Common myeloid progenitor, CD34-positive (primary cell): ENCODE measurements at regions of chr7 and their contacts with region 1.

Region 1: GRCh38 chr7:142469696-142470543 is 212.1 kb upstream of the PRSS58 start:
- DNase-seq: peak; percentile 93 to 98 (median 97)
- H3K4me3 ChIP-seq: peak overlapping the region in 5 of 7 experiments; percentile 24 to 54 (median 33)
- H3K27ac ChIP-seq: peak overlapping the region; percentile 59 to 79
- H3K4me1 ChIP-seq: peaks cover 18 to 90% (median 68%) of the 10 kb centered on the region in 4 experiments
- H3K27me3 ChIP-seq: no peaks in the 10 kb centered on the region

Region 2: GRCh38 chr7:142459551-142459963 is 10.4 kb before region 1 on chr7:
- CTCF ChIA-PET with region 1: interaction called, 2,564 read pairs
- POLR2A ChIA-PET with region 1: interaction called, 16 read pairs
- DNase-seq: peak; percentile 83 to 89 (median 83)
- H3K4me3 ChIP-seq: peak overlapping the region in 1 of 7 experiments; percentile 36
- H3K27ac ChIP-seq: peak overlapping the region; percentile 27 to 31
- H3K4me1 ChIP-seq: peaks cover 9 to 80% (median 67%) of the 10 kb centered on the region in 4 experiments
- H3K27me3 ChIP-seq: no peaks in the 10 kb centered on the region